ENCODE measurements at regions of chr10 and their contacts with region 1.

Region 1: DNA sequence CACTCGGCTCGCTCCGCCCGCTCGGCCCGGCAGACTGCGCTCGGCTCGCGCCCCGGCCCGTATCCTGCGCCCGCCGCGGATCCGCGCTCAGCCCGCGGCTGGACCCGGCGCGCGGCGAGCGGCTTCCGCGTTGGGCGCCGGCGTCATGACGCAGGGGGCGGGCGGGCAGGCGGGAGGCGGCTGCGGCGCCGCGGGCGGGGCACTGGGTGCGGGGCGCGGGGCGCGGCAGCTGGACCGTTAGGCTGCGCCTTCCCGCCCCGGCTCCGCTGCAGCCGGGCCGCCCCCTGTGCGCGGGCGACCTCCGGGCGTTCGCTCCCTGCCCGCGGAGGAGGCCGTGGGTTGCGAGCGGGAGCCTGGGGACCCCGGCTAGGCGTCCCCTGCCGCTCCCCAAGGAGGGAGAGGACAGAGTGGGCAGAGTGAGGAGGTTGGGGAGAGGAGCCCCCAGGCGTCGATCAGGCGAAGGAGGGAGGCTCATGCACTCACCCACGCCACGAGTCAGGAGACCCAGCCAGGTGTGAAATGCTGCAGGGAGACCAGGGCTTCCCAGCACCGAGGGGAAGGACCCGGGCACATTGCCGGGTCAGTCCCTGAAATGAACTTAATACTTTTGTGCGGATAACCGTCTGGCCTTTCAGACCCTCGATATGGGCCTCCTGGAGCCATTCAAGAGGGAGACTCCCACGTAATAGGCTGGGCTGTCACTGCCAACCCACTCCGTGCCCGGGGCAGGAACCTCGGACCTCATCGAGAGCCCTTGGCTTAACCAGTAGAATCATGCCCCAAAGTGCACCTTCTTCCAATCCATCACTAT is at the start of gene PIP4K2A:
- DNase-seq: peak; percentile 5 to 96 (median 81)
- ATAC-seq: peak; percentile 87
- H3K4me3 ChIP-seq: peak within 1 kb of the TSS; percentile 82 to 93
- H3K27ac ChIP-seq: peak within 1 kb of the TSS; percentile 80 to 92
- H3K4me1 ChIP-seq: peaks cover 0 to 41% of the 10 kb centered on the region in 2 donors
- H3K27me3 ChIP-seq: no peaks in the 10 kb centered on the region
- CTCF ChIP-seq: no peak
- polyA plus RNA-seq, gene PIP4K2A: 24.9 to 30.2 (median 28.8) TPM

Region 2: DNA sequence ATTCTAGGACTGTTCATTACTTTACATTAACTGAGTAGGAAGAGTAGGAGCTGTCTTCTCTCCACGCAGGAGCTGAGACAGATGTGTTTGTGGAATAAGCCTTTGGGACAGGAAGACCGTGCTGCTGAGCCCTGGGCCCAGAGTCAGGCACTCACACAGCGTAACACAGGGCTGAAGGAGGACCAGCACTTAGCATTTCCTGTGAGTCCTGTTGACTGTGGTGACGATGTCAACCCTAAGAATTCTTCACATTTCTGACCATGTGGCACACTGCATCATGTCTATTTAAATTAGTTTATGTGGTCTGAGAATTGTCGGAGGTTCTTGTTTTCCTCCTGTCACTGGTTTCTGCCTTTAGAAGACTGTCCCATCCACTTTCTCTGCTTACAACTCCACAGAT is 117.5 kb before region 1 on chr10:
- intact Hi-C with region 1: no loop called
- DNase-seq: no peak
- ATAC-seq: no peak
- H3K4me3 ChIP-seq: no peak overlapping the region
- H3K27ac ChIP-seq: no peak overlapping the region
- H3K4me1 ChIP-seq: peaks cover 0 to 24% of the 10 kb centered on the region in 2 donors
- H3K27me3 ChIP-seq: no peaks in the 10 kb centered on the region
- CTCF ChIP-seq: no peak

Region 3: GRCh38 chr10:22615819-22616499 is 98.7 kb before region 1 on chr10:
- intact Hi-C with region 1: loop called in 1 of 2 experiments (anchors 10 kb)
- DNase-seq: peak in 2 of 4 donors; percentile 70 to 90
- ATAC-seq: peak; percentile 91
- H3K4me3 ChIP-seq: peak overlapping the region in 1 of 2 donors; percentile 27
- H3K27ac ChIP-seq: peak overlapping the region; percentile 33 to 72
- H3K4me1 ChIP-seq: peaks cover 13 to 84% of the 10 kb centered on the region in 2 donors
- H3K27me3 ChIP-seq: no peaks in the 10 kb centered on the region
- CTCF ChIP-seq: no peak